H1 (cell line): ENCODE measurements at regions of chr3 and their contacts with region 1.

Region 1: GRCh38 chr3:123449102-123449996 is 459 bp upstream of the ADCY5 start:
- DNase-seq: peak in 1 of 2 experiments; percentile 80
- H3K4me3 ChIP-seq: peak overlapping the region; percentile 53 to 73 (median 63)
- H3K27ac ChIP-seq: no peak overlapping the region
- H3K4me1 ChIP-seq: peaks cover 0 to 13% (median 4%) of the 10 kb centered on the region in 4 experiments; a peak in 6 of 7 replicates
- H3K27me3 ChIP-seq: peaks cover 11 to 39% (median 28%) of the 10 kb centered on the region in 4 experiments
- CTCF ChIP-seq: no peak
- EP300 ChIP-seq: no peak
- POLR2A ChIP-seq: no peak
- RAD21 ChIP-seq: no peak

Region 2: GRCh38 chr3:123201566-123202427 is 247.6 kb before region 1 on chr3 and contains the start of gene SEC22A:
- CTCF ChIA-PET with region 1: no interaction called
- POLR2A ChIA-PET with region 1: no interaction called
- DNase-seq: peak; percentile 92 to 95
- H3K4me3 ChIP-seq: peak within 1 kb of the TSS; percentile 83 to 94 (median 88)
- H3K27ac ChIP-seq: peak within 1 kb of the TSS; percentile 73
- H3K4me1 ChIP-seq: peaks cover 0 to 2% (median 0%) of the 10 kb centered on the region in 4 experiments; a peak in 3 of 7 replicates
- H3K27me3 ChIP-seq: no peaks in the 10 kb centered on the region
- CTCF ChIP-seq: no peak
- EP300 ChIP-seq: peak in 1 of 2 experiments; percentile 6; a peak in 1 of 3 replicates
- POLR2A ChIP-seq: peak in 1 of 2 experiments; percentile 87; a peak in 2 of 3 replicates
- RAD21 ChIP-seq: no peak
- total RNA-seq, gene SEC22A: 10.4 and 10.6 TPM in 2 replicates

Region 3: DNA sequence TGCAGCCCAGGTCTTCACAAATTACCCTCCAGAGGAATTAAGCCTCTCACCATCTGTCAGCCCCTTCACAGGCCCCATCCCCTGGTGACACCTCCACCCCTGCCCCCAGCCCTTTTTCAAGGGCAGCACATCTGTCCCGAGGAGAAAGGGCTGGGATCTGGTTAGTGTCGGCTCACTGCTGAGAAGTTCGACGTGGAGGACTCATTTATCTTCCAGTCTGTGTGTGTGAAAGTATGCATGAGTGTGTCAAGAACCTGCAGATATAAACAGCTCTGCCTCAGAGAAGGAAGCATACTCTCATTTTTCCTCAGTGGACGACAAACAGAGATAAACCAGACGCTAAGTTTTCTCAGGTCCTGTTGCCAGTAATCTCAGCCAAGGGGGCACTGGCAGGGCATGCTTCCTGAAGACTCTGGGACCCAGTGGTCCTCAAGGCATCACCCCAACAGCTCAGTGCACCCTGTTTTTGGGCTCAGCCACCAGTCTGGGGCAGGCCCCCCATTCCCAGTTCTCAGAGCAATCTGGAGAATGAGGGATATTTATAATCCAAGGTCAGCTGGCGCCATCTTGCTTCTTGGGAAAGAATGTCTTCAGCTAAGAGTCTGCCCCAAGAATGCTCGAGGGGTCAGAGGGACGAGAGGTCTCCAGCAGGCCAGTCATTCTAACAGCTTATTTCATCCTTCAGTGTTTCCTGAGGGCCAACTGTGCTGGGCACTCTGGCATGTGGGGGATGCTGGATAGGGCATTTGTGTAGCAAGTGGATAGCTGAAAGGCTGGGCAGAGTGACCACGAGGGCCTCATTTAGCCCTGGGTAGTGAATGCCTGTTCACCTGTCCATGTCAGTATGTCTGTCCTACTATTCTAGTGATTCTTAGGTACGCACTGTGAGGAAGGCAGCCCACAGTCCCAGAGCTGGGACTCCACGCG is 74.1 kb before region 1 on chr3:
- CTCF ChIA-PET with region 1: interaction called, 21 read pairs
- POLR2A ChIA-PET with region 1: interaction called, 3 read pairs
- DNase-seq: no peak
- H3K4me3 ChIP-seq: no peak overlapping the region
- H3K27ac ChIP-seq: no peak overlapping the region
- H3K4me1 ChIP-seq: peaks cover 0 to 4% (median 0%) of the 10 kb centered on the region in 4 experiments; a peak in 1 of 7 replicates
- H3K27me3 ChIP-seq: peaks cover 0 to 2% (median 0%) of the 10 kb centered on the region in 4 experiments; a peak in 1 of 7 replicates
- CTCF ChIP-seq: peak; percentile 29 to 67 (median 54)
- EP300 ChIP-seq: no peak
- POLR2A ChIP-seq: no peak
- RAD21 ChIP-seq: peak; percentile 77 to 84

Region 4: DNA sequence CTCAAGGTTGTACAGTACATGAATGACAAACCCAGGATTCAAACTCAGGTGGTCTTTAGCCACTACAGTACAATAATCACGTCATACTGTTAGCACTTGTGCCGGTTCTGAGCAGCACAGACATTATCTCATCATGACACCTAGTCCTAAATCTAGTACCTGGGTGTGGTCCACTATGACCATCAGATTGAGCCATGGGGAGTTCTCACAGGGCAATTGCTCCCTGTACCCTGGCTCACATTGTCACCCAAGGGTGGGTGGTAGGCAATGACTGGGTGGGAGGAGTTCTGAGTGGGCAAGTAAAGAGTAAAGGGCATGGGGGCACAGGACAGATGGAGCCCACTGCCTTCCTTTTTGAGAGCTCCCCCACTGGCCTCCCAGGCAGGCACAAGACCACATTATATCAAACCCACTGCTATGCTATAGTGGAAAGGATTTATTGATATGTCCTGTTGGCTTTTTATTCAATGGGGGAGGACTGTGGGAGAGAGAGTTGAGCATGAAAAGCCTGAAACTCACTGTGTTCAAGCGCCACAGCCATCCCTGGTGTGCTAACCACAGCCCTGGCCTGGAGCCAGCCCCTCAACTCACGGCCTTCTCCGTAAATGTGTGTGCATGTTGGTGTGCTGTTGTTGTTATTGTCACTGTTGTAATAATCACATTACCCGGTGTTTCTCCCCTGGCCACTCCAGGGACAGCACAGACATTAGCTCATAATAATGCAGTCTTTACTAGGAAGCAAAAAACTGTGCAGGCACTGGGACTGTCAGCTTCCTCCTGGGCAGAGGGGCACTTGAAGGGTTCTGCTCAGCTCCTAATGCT is 27.8 kb before region 1 on chr3:
- CTCF ChIA-PET with region 1: interaction called, 13 read pairs
- POLR2A ChIA-PET with region 1: interaction called, 3 read pairs
- DNase-seq: no peak
- H3K4me3 ChIP-seq: no peak overlapping the region
- H3K27ac ChIP-seq: no peak overlapping the region
- H3K4me1 ChIP-seq: no peaks in the 10 kb centered on the region; a peak in 2 of 7 replicates
- H3K27me3 ChIP-seq: no peaks in the 10 kb centered on the region
- CTCF ChIP-seq: no peak
- EP300 ChIP-seq: no peak
- POLR2A ChIP-seq: no peak
- RAD21 ChIP-seq: no peak

Region 5: GRCh38 chr3:123431658-123432324 is 17.6 kb before region 1 on chr3:
- CTCF ChIA-PET with region 1: interaction called, 34 read pairs
- POLR2A ChIA-PET with region 1: no interaction called
- DNase-seq: no peak
- H3K4me3 ChIP-seq: no peak overlapping the region
- H3K27ac ChIP-seq: no peak overlapping the region
- H3K4me1 ChIP-seq: no peaks in the 10 kb centered on the region
- H3K27me3 ChIP-seq: no peaks in the 10 kb centered on the region
- CTCF ChIP-seq: no peak
- EP300 ChIP-seq: no peak
- POLR2A ChIP-seq: no peak
- RAD21 ChIP-seq: no peak

Region 6: GRCh38 chr3:123459881-123460280 is 10.5 kb after region 1 on chr3:
- CTCF ChIA-PET with region 1: interaction called, 35 read pairs
- POLR2A ChIA-PET with region 1: interaction called, 6 read pairs
- DNase-seq: no peak
- H3K4me3 ChIP-seq: no peak overlapping the region
- H3K27ac ChIP-seq: no peak overlapping the region
- H3K4me1 ChIP-seq: peaks cover 0 to 6% (median 3%) of the 10 kb centered on the region in 4 experiments; a peak in 5 of 7 replicates
- H3K27me3 ChIP-seq: no peaks in the 10 kb centered on the region
- CTCF ChIP-seq: no peak
- EP300 ChIP-seq: no peak
- POLR2A ChIP-seq: no peak
- RAD21 ChIP-seq: no peak

Region 7: DNA sequence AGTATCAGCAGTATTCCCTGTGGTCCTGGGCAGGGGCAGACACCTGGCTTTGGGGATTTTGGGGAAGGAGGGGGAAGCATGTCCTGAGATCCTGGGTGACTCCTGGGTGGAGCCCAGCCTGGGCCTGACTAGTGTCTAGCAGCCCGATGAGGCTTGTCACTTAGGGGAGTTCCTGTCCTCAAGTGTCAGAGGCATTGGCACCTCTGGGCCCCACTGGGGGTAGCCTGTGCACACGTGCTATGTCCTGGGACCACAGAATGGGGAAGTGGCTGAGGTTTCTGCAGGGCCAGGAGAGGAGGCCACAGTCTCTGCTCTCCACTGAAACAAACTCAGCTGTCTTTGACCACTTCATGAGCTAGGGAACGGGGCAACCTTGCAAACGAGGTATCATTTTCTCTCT is 31.1 kb after region 1 on chr3:
- CTCF ChIA-PET with region 1: interaction called, 22 read pairs
- POLR2A ChIA-PET with region 1: no interaction called
- DNase-seq: no peak
- H3K4me3 ChIP-seq: no peak overlapping the region
- H3K27ac ChIP-seq: no peak overlapping the region
- H3K4me1 ChIP-seq: no peaks in the 10 kb centered on the region
- H3K27me3 ChIP-seq: no peaks in the 10 kb centered on the region; a peak in 1 of 7 replicates
- CTCF ChIP-seq: no peak
- EP300 ChIP-seq: no peak
- POLR2A ChIP-seq: no peak
- RAD21 ChIP-seq: no peak

Region 8: DNA sequence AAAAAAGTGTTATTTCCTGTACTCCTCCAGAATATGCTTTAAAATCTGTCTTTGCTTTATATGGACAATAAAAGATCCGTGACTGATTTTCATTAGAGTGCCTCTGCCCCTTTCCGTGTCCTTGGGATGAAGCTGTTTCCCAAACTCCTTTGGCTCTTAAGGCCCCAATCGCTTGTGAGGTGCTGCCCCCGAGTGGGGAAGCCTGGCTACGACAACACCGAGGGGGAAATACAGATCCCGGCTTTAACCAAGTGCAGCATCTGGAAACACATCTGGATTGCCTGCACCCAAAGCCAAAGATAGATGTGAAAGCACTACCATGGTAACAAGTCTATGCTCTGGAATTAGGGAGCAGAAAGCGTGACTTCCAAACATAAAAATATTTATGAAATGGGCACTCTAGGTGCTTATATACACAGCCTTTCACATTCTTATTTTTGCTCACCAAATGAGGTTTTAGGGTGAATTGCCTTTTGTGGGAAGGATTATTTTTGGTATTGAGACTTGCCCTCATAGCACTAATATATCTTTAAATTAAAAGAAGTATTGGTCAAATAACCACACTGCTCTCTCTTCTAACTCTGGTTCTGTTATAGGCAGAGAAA is 40.2 kb after region 1 on chr3:
- CTCF ChIA-PET with region 1: interaction called, 22 read pairs
- POLR2A ChIA-PET with region 1: interaction called, 3 read pairs
- DNase-seq: peak; percentile 62 to 96
- H3K4me3 ChIP-seq: no peak overlapping the region
- H3K27ac ChIP-seq: no peak overlapping the region
- H3K4me1 ChIP-seq: no peaks in the 10 kb centered on the region
- H3K27me3 ChIP-seq: no peaks in the 10 kb centered on the region
- CTCF ChIP-seq: peak; percentile 85 to 95 (median 93)
- EP300 ChIP-seq: no peak
- POLR2A ChIP-seq: no peak
- RAD21 ChIP-seq: peak; percentile 99

Region 9: GRCh38 chr3:123521179-123521969 is 72.0 kb after region 1 on chr3:
- CTCF ChIA-PET with region 1: no interaction called
- POLR2A ChIA-PET with region 1: no interaction called
- DNase-seq: no peak
- H3K4me3 ChIP-seq: no peak overlapping the region
- H3K27ac ChIP-seq: no peak overlapping the region
- H3K4me1 ChIP-seq: no peaks in the 10 kb centered on the region
- H3K27me3 ChIP-seq: no peaks in the 10 kb centered on the region
- CTCF ChIP-seq: no peak
- EP300 ChIP-seq: no peak
- POLR2A ChIP-seq: no peak
- RAD21 ChIP-seq: no peak